ENCODE measurements at regions of chr15 and their contacts with region 1.

Region 1: GRCh38 chr15:85582131-85583079 is 202.0 kb downstream of the AKAP13 start:
- DNase-seq: no peak
- ATAC-seq: no peak
- H3K4me3 ChIP-seq: no peak overlapping the region
- H3K27ac ChIP-seq: no peak overlapping the region
- H3K4me1 ChIP-seq: peaks cover 44% of the 10 kb centered on the region
- H3K27me3 ChIP-seq: no peaks in the 10 kb centered on the region
- CTCF ChIP-seq: no peak

Region 2: DNA sequence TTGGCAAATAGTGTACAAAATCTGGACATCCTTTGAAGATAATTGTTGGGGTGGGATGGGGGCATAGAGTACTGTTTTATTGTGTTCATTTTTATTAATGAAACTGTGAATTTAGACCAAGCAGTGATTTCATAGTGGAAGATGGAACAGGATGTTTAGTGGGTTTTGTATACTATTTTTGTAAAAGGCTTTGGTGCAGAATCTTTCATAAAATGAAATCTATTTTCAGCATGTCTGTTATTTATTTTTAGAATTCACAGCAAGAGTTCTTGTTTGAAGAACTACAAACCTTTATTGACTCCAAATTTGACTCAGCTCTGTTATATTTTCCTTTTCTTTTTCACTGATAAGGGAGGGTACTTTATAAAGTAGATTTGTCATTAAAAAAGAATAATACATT is 56.6 kb before region 1 on chr15:
- CTCF ChIA-PET with region 1: no interaction called
- POLR2A ChIA-PET with region 1: interaction called, 10 read pairs
- intact Hi-C with region 1: no loop called
- DNase-seq: no peak
- ATAC-seq: no peak
- H3K4me3 ChIP-seq: no peak overlapping the region
- H3K27ac ChIP-seq: no peak overlapping the region
- H3K4me1 ChIP-seq: no peaks in the 10 kb centered on the region
- H3K27me3 ChIP-seq: no peaks in the 10 kb centered on the region
- CTCF ChIP-seq: no peak